Activated naive CD4-positive, alpha-beta T cell treated with anti-CD3 and anti-CD28 coated beads for 36 hours (primary cell): ENCODE measurements at regions of chr1 and their contacts with region 1.

Region 1: DNA sequence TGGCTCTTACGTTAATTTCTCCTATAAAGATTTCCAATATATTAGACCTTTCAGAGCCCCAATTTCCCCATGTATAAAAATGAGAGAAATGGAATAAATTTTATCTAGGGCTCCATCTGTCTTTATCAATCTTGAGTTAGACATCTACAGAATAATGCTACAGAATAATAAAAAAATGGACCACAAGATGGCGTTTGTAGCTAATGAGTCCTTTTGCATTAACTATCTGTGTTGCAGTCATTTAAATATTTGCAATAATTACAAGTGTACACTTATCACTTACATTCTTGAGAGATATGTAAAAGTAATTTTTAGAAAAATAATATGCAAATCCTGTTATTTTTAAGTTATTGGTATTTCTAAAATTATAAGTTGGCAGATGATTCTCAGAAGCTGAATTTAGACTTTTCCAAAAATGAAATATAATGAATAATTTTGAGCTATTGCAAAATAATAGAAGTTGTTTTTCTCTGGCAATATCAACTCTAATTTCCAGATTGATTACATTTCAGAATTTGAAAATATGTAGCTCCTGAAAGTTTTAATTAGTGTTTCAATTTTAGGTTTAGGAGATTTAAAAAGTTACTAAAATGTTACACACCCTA is 87.7 kb downstream of the SNX7 start:
- DNase-seq: no peak
- H3K4me3 Mint-ChIP-seq: no peak overlapping the region
- H3K27ac Mint-ChIP-seq: no peak overlapping the region
- H3K4me1 Mint-ChIP-seq: no peaks in the 10 kb centered on the region
- H3K27me3 Mint-ChIP-seq: no peaks in the 10 kb centered on the region

Region 2: DNA sequence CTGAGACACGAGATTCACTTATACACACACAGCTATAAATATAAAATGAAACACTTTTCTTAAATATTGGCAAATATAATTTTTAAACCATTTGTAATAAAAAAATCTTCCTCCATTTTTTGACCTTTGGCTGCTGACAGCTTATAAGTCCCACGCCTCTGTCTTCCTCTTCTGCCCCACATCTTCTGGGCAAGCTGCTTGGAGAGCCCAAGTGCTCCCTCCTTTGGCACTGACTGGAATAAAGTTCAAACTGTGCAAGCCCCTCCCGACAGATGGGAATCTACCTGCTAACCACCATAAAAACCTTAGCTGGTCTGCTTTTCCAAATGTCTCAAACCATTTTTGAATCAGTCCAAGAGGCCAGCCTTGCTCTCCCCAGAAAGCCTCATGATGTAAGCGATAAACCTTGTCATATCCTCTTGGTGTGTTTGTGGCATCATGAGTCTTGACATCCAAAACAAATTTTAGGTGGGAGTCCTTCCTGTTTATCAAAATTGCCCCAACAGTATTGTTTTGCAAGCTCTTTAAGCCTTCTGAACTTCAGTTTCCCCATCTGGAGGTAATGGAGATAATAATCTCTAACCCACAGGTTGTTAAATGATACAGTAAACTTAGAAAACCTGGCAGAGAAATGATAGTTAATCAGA is 12.1 kb after region 1 on chr1:
- CTCF ChIA-PET with region 1: interaction called, 12 read pairs
- intact Hi-C with region 1: no loop called
- DNase-seq: no peak
- H3K4me3 Mint-ChIP-seq: no peak overlapping the region
- H3K27ac Mint-ChIP-seq: no peak overlapping the region
- H3K4me1 Mint-ChIP-seq: no peaks in the 10 kb centered on the region
- H3K27me3 Mint-ChIP-seq: no peaks in the 10 kb centered on the region

Region 3: DNA sequence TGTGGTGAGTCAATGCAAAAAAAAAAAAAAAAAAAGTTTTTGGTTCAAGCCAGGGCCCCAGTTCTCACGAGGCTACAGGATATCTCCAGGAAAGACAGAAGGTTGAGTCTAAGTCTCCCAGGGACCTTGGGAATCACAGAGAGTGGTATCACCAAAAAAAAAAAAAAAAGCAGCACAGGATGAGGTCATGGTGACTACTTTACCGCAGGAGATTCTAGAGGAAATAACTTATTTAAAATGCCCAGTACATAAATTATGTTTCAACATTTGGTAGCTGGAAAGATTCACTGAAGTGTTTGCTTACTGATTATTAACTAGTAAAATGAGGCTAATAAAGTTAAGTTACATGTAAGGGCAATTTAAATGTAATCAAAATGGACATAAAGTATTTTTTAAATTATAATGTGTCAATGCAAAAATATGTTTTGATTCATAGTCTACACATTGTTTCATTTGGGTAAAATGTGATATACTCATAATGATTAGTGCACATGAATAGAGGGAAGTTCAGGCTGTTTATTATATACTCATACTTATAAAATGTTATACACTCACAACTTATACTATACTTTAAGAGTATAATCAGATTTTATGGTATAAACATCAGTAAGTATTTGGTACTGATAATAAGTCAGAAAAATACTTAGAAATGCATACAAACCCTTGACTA is 171.3 kb after region 1 on chr1:
- CTCF ChIA-PET with region 1: no interaction called
- intact Hi-C with region 1: no loop called
- DNase-seq: no peak
- H3K4me3 Mint-ChIP-seq: no peak overlapping the region
- H3K27ac Mint-ChIP-seq: no peak overlapping the region
- H3K4me1 Mint-ChIP-seq: peaks cover 2% of the 10 kb centered on the region
- H3K27me3 Mint-ChIP-seq: no peaks in the 10 kb centered on the region

Region 4: GRCh38 chr1:99481391-99481996 is 732.2 kb after region 1 on chr1:
- CTCF ChIA-PET with region 1: interaction called, 28 read pairs
- intact Hi-C with region 1: loop called (anchors 1 kb)
- DNase-seq: peak; percentile 57
- H3K4me3 Mint-ChIP-seq: no peak overlapping the region
- H3K27ac Mint-ChIP-seq: no peak overlapping the region
- H3K4me1 Mint-ChIP-seq: no peaks in the 10 kb centered on the region
- H3K27me3 Mint-ChIP-seq: peaks cover 21% of the 10 kb centered on the region

Region 5: GRCh38 chr1:99707535-99708142 is 958.4 kb after region 1 on chr1:
- CTCF ChIA-PET with region 1: no interaction called
- intact Hi-C with region 1: loop called (anchors 2 kb)
- DNase-seq: peak; percentile 81
- H3K4me3 Mint-ChIP-seq: no peak overlapping the region
- H3K27ac Mint-ChIP-seq: no peak overlapping the region
- H3K4me1 Mint-ChIP-seq: peaks cover 2% of the 10 kb centered on the region
- H3K27me3 Mint-ChIP-seq: peaks cover 2% of the 10 kb centered on the region